BJ (cell line): ENCODE measurements at regions of chr4 and their contacts with region 1.

Region 1: GRCh38 chr4:155787113-155787710 is 28.4 kb downstream of the GUCY1B1 start:
- DNase-seq: no peak
- H3K4me3 ChIP-seq: no peak overlapping the region
- H3K27me3 ChIP-seq: no peaks in the 10 kb centered on the region
- CTCF ChIP-seq: peak; percentile 90

Region 2: DNA sequence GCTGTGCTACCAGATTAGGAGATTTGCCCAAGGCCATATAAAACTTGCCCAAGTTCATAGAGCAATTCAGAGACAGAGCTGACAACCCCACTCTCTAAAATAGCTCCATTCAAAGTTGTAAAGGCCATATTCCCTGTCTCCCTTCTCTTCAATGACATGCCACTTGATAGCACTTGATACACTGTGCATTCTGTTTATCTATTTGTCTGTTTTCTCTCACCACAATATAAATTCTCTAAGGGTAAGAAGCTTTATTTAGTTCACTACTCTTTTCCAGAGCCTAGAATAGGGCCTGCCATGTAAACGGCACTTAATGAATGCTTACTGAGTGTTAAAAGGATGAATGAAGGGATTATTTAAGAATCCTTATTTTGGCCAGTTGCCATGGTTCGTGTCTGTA is 386.3 kb before region 1 on chr4:
- CTCF ChIA-PET with region 1: interaction called, 10 read pairs
- POLR2A ChIA-PET with region 1: no interaction called
- DNase-seq: no peak
- H3K4me3 ChIP-seq: no peak overlapping the region
- H3K27me3 ChIP-seq: no peaks in the 10 kb centered on the region
- CTCF ChIP-seq: no peak

Region 3: GRCh38 chr4:155442267-155443105 is 344.7 kb before region 1 on chr4:
- CTCF ChIA-PET with region 1: interaction called, 22 read pairs
- POLR2A ChIA-PET with region 1: no interaction called
- DNase-seq: no peak
- H3K4me3 ChIP-seq: no peak overlapping the region
- H3K27me3 ChIP-seq: no peaks in the 10 kb centered on the region
- CTCF ChIP-seq: peak; percentile 96

Region 4: GRCh38 chr4:155604718-155605626 is 182.2 kb before region 1 on chr4:
- CTCF ChIA-PET with region 1: no interaction called
- POLR2A ChIA-PET with region 1: no interaction called
- DNase-seq: peak; percentile 64
- H3K4me3 ChIP-seq: no peak overlapping the region
- H3K27me3 ChIP-seq: no peaks in the 10 kb centered on the region
- CTCF ChIP-seq: no peak